Panc1 (cell line): ENCODE measurements at regions of chr6 and their contacts with region 1.

Region 1: GRCh38 chr6:26122793-26123674 is 35.8 kb downstream of the HFE start:
- DNase-seq: peak; percentile 95
- ATAC-seq: peak; percentile 65
- H3K4me3 ChIP-seq: peak overlapping the region; percentile 82 to 100
- H3K27ac ChIP-seq: peak overlapping the region; percentile 100
- H3K4me1 ChIP-seq: peaks cover 38% of the 10 kb centered on the region
- H3K27me3 ChIP-seq: no peaks in the 10 kb centered on the region
- CTCF ChIP-seq: no peak

Region 2: GRCh38 chr6:25042036-25042521 is 1081.0 kb before region 1 on chr6:
- CTCF ChIA-PET with region 1: no interaction called
- POLR2A ChIA-PET with region 1: no interaction called
- in situ Hi-C with region 1: no loop called
- intact Hi-C with region 1: no loop called
- DNase-seq: no peak
- ATAC-seq: no peak
- H3K4me3 ChIP-seq: no peak overlapping the region
- H3K27ac ChIP-seq: no peak overlapping the region
- H3K4me1 ChIP-seq: no peaks in the 10 kb centered on the region
- H3K27me3 ChIP-seq: no peaks in the 10 kb centered on the region; the same call in 1 of the 2 replicates
- CTCF ChIP-seq: no peak

Region 3: GRCh38 chr6:25248100-25248499 is 874.9 kb before region 1 on chr6:
- CTCF ChIA-PET with region 1: no interaction called
- POLR2A ChIA-PET with region 1: no interaction called
- in situ Hi-C with region 1: no loop called
- intact Hi-C with region 1: no loop called
- DNase-seq: no peak
- ATAC-seq: no peak
- H3K4me3 ChIP-seq: no peak overlapping the region
- H3K27ac ChIP-seq: no peak overlapping the region
- H3K4me1 ChIP-seq: no peaks in the 10 kb centered on the region
- H3K27me3 ChIP-seq: no peaks in the 10 kb centered on the region
- CTCF ChIP-seq: no peak

Region 4: DNA sequence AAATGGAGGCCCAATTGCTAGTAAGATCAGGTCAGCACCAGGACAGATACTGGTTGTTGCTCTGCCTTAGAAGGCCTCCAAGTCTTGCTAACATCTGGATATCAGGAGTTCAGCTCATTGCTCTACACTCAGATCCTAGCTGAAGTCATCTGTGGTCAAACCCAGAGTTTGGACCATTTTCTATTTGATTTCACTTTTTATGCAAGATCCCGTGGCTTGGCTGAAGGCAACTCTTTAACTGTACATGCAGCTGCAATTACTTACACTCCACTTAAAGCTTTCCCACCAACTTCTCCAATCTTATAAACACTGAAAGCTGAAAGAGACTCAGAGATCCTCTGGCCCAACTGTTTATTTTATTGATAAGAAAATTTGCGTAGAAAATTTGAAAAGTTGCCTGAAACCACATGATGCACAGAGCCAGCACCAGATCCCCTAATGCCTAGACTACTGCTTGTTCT is 195.2 kb before region 1 on chr6:
- CTCF ChIA-PET with region 1: no interaction called
- POLR2A ChIA-PET with region 1: no interaction called
- in situ Hi-C with region 1: no loop called
- intact Hi-C with region 1: no loop called
- DNase-seq: no peak
- ATAC-seq: no peak
- H3K4me3 ChIP-seq: no peak overlapping the region
- H3K27ac ChIP-seq: no peak overlapping the region
- H3K4me1 ChIP-seq: no peaks in the 10 kb centered on the region
- H3K27me3 ChIP-seq: no peaks in the 10 kb centered on the region
- CTCF ChIP-seq: no peak

Region 5: GRCh38 chr6:26031595-26032339 is 91.3 kb before region 1 on chr6:
- CTCF ChIA-PET with region 1: interaction called, 7 read pairs
- POLR2A ChIA-PET with region 1: interaction called, 12 read pairs
- in situ Hi-C with region 1: no loop called
- intact Hi-C with region 1: no loop called
- DNase-seq: peak; percentile 98
- ATAC-seq: peak; percentile 77
- H3K4me3 ChIP-seq: peak overlapping the region; percentile 84 to 91
- H3K27ac ChIP-seq: peak overlapping the region; percentile 100
- H3K4me1 ChIP-seq: peaks cover 42% of the 10 kb centered on the region
- H3K27me3 ChIP-seq: no peaks in the 10 kb centered on the region
- CTCF ChIP-seq: no peak; the same call in 1 of the 2 replicates

Region 6: DNA sequence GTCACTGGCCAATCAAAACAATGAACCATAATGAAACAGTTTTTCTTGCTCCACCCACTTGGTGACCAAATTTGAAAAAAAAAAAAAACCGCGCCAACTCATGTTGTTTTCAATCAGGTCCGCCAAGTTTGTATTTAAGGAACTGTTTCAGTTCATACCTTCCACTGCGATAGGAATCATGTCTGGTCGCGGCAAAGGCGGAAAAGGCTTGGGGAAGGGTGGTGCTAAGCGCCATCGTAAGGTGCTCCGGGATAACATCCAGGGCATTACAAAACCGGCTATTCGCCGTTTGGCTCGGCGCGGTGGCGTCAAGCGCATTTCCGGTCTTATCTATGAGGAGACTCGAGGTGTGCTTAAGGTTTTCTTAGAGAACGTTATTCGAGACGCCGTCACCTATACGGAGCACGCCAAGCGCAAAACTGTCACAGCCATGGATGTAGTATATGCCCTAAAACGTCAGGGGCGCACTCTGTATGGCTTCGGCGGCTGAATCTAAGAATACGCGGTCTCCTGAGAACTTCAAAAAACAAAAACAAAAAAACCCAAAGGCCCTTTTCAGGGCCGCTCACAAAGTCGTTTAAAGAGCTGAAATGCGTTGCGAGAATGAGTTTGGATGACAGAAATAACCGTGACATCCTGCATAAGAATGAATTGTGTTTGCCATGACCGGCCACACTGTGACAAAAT is 19.1 kb before region 1 on chr6:
- CTCF ChIA-PET with region 1: interaction called, 6 read pairs
- POLR2A ChIA-PET with region 1: interaction called, 12 read pairs
- in situ Hi-C with region 1: no loop called
- intact Hi-C with region 1: no loop called
- DNase-seq: peak; percentile 98
- ATAC-seq: peak; percentile 89
- H3K4me3 ChIP-seq: peak overlapping the region; percentile 58 to 79
- H3K27ac ChIP-seq: peak overlapping the region; percentile 99
- H3K4me1 ChIP-seq: peaks cover 16% of the 10 kb centered on the region
- H3K27me3 ChIP-seq: no peaks in the 10 kb centered on the region
- CTCF ChIP-seq: peak; percentile 62

Region 7: DNA sequence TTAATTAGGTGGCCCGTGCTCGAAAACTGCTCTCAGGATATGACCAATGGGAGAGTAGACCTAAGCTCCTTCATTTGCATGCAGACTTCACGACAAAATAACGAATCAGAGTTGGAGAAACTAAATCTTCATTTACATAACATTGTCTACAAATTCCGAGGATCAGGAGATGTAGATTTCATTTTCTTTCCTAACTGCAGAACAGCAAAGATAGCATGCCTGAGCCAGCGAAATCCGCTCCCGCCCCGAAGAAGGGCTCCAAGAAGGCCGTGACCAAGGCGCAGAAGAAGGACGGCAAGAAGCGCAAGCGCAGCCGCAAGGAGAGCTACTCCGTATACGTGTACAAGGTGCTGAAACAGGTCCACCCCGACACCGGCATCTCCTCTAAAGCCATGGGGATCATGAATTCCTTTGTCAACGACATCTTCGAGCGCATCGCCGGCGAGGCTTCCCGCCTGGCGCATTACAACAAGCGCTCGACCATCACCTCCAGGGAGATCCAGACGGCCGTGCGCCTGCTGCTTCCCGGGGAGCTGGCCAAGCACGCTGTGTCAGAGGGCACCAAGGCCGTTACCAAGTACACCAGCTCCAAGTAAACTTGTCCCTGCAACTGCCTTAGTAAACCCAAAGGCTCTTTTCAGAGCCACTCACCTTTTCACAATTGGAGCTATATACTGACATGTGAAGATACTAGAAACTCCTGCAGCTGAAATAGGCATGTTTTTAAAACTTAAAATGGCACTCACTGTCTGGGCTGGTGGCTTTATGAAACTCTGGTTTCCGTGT is 60.7 kb after region 1 on chr6:
- CTCF ChIA-PET with region 1: no interaction called
- POLR2A ChIA-PET with region 1: interaction called, 18 read pairs
- in situ Hi-C with region 1: no loop called
- intact Hi-C with region 1: no loop called
- DNase-seq: peak; percentile 93
- ATAC-seq: peak; percentile 86
- H3K4me3 ChIP-seq: peak overlapping the region; percentile 51 to 66
- H3K27ac ChIP-seq: peak overlapping the region; percentile 95
- H3K4me1 ChIP-seq: peaks cover 30% of the 10 kb centered on the region
- H3K27me3 ChIP-seq: no peaks in the 10 kb centered on the region
- CTCF ChIP-seq: no peak

Region 8: DNA sequence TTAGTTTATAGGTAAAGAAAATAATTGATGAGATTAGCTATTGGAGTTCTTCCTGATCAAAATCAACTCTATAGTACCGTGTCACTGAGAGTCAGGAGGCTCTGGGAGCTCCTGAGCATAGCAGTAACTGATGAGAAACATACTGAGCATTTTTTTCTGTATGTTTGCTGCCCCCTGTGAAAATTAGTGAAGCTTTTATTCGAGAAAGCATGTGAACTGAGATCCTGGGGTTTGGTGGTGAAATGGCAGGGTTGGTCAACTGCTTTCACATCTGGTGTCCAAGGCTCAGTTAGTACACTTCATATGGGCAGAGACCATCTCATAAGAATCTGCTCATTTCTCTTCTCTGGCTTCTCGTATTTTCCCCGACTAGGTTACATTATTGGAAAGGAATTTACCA is 469.6 kb after region 1 on chr6:
- CTCF ChIA-PET with region 1: no interaction called
- POLR2A ChIA-PET with region 1: no interaction called
- in situ Hi-C with region 1: no loop called
- intact Hi-C with region 1: no loop called
- DNase-seq: no peak
- ATAC-seq: no peak
- H3K4me3 ChIP-seq: no peak overlapping the region
- H3K27ac ChIP-seq: no peak overlapping the region
- H3K4me1 ChIP-seq: peaks cover 3% of the 10 kb centered on the region; the same call in 1 of the 2 replicates
- H3K27me3 ChIP-seq: no peaks in the 10 kb centered on the region
- CTCF ChIP-seq: no peak

Region 9: DNA sequence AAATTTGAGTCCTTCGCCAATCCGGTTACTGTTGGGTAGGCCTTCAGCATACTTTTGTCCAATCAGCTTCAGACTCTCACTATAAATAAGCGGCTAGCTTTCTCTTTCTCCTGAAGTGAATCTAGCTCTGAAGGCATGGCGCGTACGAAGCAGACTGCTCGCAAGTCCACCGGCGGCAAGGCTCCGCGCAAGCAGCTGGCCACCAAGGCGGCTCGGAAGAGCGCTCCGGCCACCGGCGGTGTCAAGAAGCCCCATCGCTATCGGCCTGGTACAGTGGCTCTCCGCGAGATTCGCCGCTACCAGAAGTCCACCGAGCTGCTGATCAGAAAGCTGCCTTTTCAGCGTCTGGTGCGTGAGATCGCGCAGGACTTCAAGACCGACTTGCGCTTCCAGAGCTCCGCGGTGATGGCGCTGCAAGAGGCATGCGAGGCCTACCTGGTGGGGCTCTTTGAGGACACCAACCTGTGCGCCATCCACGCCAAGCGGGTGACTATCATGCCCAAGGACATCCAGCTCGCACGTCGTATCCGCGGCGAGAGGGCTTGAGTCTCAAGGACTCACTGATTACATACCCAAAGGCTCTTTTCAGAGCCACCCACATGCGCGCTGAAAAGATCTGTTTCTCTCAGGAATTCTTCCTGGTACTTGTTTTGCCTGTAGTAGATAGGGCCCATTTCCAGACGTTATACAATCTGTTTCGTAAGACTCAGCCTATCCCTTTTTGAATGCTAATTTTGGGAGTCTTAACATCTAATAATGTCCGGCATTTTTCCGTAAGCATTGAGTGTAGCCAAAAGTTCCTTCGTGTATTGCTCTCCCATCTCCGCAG is 1687.1 kb after region 1 on chr6:
- CTCF ChIA-PET with region 1: no interaction called
- POLR2A ChIA-PET with region 1: interaction called, 8 read pairs
- in situ Hi-C with region 1: no loop called
- intact Hi-C with region 1: loop called (anchors 5 kb)
- DNase-seq: peak; percentile 96
- ATAC-seq: peak; percentile 44
- H3K4me3 ChIP-seq: peak overlapping the region; percentile 78 to 93
- H3K27ac ChIP-seq: peak overlapping the region; percentile 100
- H3K4me1 ChIP-seq: peaks cover 17% of the 10 kb centered on the region
- H3K27me3 ChIP-seq: no peaks in the 10 kb centered on the region
- CTCF ChIP-seq: no peak

Region 10: DNA sequence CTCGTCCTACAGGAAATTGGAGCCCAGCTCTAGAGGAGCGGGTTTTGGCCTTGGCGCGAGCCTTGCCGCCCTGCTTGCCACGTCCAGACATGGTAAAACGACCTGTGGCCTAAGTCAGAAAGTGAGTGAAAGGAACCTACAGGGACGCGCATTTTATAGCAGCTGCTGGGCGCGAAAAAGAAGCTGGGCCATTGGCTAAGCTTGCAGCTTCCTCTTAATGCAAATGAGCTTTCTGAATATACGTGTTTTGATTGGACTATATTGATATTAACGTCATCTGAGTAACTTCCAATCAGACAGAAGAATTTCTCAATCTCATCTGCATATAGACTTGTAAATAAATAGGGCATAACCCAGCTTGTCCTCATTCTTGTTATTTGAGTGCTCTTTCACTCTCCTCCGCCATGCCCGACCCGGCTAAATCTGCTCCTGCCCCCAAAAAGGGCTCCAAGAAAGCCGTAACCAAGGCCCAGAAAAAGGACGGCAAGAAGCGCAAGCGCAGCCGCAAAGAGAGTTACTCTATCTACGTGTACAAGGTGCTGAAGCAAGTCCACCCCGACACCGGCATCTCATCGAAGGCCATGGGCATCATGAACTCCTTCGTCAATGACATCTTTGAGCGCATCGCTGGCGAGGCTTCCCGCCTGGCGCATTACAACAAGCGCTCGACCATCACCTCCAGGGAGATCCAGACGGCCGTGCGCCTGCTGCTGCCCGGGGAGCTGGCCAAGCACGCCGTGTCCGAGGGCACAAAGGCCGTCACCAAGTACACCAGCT is 1770.2 kb after region 1 on chr6:
- CTCF ChIA-PET with region 1: no interaction called
- POLR2A ChIA-PET with region 1: no interaction called
- in situ Hi-C with region 1: no loop called
- intact Hi-C with region 1: loop called (anchors 5 kb)
- DNase-seq: peak; percentile 97
- ATAC-seq: peak; percentile 81
- H3K4me3 ChIP-seq: peak overlapping the region; percentile 87 to 90
- H3K27ac ChIP-seq: peak overlapping the region; percentile 99
- H3K4me1 ChIP-seq: peaks cover 30% of the 10 kb centered on the region
- H3K27me3 ChIP-seq: no peaks in the 10 kb centered on the region
- CTCF ChIP-seq: no peak